Dorsolateral prefrontal cortex (tissue), 120 donors: ENCODE measurements at regions of chr19 and their contacts with region 1.

Region 1: GRCh38 chr19:33438007-33438671 is 64.6 kb downstream of the CEBPG start:
- DNase-seq: peak in 8 of 10 donors; percentile 48 to 73 (median 70)
- H3K4me3 ChIP-seq: no peak overlapping the region
- H3K27ac ChIP-seq: peak overlapping the region in 4 of 59 donors; percentile 8 to 45 (median 39)
- H3K27me3 ChIP-seq: no peaks in the 10 kb centered on the region
- CTCF ChIP-seq: peak in 51 of 56 donors; percentile 13 to 66 (median 43)

Region 2: DNA sequence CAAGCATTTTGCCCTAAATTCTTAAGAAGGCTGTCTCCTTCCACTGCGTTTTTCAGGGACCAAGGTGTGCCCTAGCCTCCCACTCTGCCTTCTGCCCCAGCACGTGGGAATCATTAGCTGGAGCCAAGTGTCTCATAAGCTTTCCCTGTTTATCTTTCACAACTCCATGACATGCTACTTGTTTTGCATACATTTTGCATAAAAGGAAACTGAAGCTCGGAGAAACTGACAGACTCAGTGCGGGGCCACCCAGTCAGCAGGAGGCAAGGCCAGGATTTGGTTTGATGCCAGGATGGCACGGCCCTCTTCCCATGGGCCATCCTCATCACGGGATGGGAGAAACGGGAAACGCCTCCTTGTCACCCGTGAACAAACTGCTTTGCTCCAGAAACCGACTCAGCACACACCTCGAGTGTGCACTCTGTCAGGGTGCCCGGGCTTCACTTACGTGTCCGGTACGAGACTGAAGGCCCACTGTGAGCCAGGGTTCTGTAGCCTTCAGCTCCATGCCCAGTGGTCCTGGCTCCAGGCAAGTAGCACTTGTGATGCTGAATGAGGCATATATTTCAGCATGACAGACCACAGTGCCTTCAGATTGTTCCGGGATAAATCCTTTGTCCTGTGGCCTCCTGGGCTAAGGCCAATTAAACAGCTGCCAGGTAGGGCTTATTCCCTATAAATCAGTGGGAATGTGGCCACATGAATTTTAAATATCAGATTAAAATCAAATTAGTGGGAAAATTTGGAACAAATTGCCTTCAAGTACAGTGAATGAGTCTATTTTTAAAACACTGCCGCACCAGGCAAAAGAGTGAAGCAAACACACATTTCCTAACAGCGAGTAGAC is 145.3 kb before region 1 on chr19:
- intact Hi-C with region 1: no loop called
- DNase-seq: no peak
- H3K4me3 ChIP-seq: no peak overlapping the region
- H3K27ac ChIP-seq: peak overlapping the region in 7 of 59 donors; percentile 6 to 53 (median 40)
- H3K27me3 ChIP-seq: peaks cover 0 to 5% (median 0%) of the 10 kb centered on the region in 45 donors
- CTCF ChIP-seq: no peak

Region 3: GRCh38 chr19:33373701-33374421 is 64.3 kb before region 1 on chr19 and contains the start of gene CEBPG:
- intact Hi-C with region 1: no loop called
- DNase-seq: peak in 1 of 10 donors; percentile 52
- H3K4me3 ChIP-seq: peak within 1 kb of the TSS; percentile 55 to 94 (median 80)
- H3K27ac ChIP-seq: peak within 1 kb of the TSS in 57 of 59 donors; percentile 7 to 97 (median 87)
- H3K27me3 ChIP-seq: no peaks in the 10 kb centered on the region
- CTCF ChIP-seq: peak in 7 of 56 donors; percentile 1 to 25 (median 7)
- total RNA-seq, gene CEBPG: 15.1 to 42.7 (median 26.1) TPM

Region 4: GRCh38 chr19:33521480-33522370 is 83.6 kb after region 1 on chr19 and contains the start of gene PEPD:
- intact Hi-C with region 1: loop called in 1 of 2 experiments (anchors 5 kb)
- DNase-seq: peak; percentile 84 to 95 (median 91)
- H3K4me3 ChIP-seq: peak within 1 kb of the TSS; percentile 57 to 100 (median 93)
- H3K27ac ChIP-seq: peak within 1 kb of the TSS in 43 of 59 donors; percentile 9 to 85 (median 59)
- H3K27me3 ChIP-seq: no peaks in the 10 kb centered on the region
- CTCF ChIP-seq: peak in 18 of 56 donors; percentile 6 to 49 (median 14)
- total RNA-seq, gene PEPD: 35.5 to 84.7 (median 59.0) TPM